ENCODE measurements at regions of chr12 and their contacts with region 1.

Region 1: GRCh38 chr12:1605129-1606020 is 11.0 kb upstream of the FBXL14 start:
- DNase-seq: peak; percentile 76
- H3K4me3 Mint-ChIP-seq: peak overlapping the region; percentile 76
- H3K27ac Mint-ChIP-seq: peak overlapping the region; percentile 81
- H3K4me1 Mint-ChIP-seq: peaks cover 39% of the 10 kb centered on the region
- H3K27me3 Mint-ChIP-seq: no peaks in the 10 kb centered on the region

Region 2: GRCh38 chr12:450438-450837 is 1154.9 kb before region 1 on chr12:
- CTCF ChIA-PET with region 1: no interaction called
- intact Hi-C with region 1: no loop called
- DNase-seq: no peak
- H3K4me3 Mint-ChIP-seq: no peak overlapping the region
- H3K27ac Mint-ChIP-seq: no peak overlapping the region
- H3K4me1 Mint-ChIP-seq: peaks cover 2% of the 10 kb centered on the region
- H3K27me3 Mint-ChIP-seq: no peaks in the 10 kb centered on the region

Region 3: GRCh38 chr12:1117970-1118563 is 487.3 kb before region 1 on chr12:
- CTCF ChIA-PET with region 1: interaction called, 27 read pairs
- intact Hi-C with region 1: loop called (anchors 1 kb)
- DNase-seq: peak; percentile 84
- H3K4me3 Mint-ChIP-seq: no peak overlapping the region
- H3K27ac Mint-ChIP-seq: no peak overlapping the region
- H3K4me1 Mint-ChIP-seq: peaks cover 19% of the 10 kb centered on the region
- H3K27me3 Mint-ChIP-seq: no peaks in the 10 kb centered on the region

Region 4: DNA sequence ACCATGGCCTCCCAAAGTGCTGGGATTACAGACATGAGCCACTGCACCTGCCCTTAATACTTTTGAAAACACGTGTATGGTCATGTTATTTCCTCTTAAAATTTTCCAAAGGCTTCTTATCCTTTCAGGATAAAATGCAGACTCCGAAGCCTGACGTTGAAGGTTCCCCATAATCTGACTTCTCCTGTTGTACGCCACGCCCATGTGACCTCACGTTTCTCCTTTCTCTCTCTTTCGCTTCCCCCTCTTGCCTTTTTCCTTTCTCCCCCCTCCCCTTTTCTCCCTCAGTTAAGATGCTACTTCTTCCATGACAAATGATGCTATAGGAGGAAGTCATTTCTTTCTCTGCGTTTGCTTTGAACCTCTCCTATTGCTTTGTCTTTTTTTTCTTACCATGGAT is 277.0 kb before region 1 on chr12:
- CTCF ChIA-PET with region 1: no interaction called
- intact Hi-C with region 1: loop called (anchors 10 kb)
- DNase-seq: no peak
- H3K4me3 Mint-ChIP-seq: no peak overlapping the region
- H3K27ac Mint-ChIP-seq: no peak overlapping the region
- H3K4me1 Mint-ChIP-seq: peaks cover 13% of the 10 kb centered on the region
- H3K27me3 Mint-ChIP-seq: no peaks in the 10 kb centered on the region

Region 5: DNA sequence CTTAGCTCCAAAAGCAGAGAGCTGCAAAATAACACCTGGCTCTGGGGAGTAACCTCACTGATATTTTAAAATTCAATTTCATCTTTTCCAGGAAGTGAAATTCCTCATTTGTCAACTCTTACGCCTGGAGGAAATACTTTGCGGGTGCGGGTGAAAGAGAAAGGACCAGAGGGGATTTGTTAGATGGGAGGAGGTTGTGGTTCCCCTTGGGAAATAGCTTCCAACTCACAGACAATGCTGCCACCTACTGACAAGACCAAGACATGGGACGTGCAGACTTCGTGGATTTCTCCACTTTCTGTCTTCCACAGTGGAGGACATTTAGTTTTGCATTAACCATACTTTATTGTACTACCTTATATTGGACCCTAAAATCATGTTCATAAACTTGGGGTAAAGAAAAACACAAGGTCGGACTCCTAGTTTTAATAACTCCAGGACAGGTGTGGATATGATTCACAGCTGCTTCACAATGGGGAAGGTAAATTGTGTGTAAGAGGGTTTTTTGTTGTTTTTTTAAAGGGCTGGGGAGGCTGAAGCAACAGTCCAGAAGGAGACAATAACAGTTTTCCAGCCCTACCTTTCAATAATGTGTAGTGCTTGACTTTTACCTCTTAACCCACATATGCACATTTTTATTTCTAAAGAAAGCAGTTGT is 21.8 kb before region 1 on chr12:
- CTCF ChIA-PET with region 1: interaction called, 16 read pairs
- intact Hi-C with region 1: no loop called
- DNase-seq: peak; percentile 83
- H3K4me3 Mint-ChIP-seq: no peak overlapping the region
- H3K27ac Mint-ChIP-seq: no peak overlapping the region
- H3K4me1 Mint-ChIP-seq: peaks cover 19% of the 10 kb centered on the region
- H3K27me3 Mint-ChIP-seq: no peaks in the 10 kb centered on the region

Region 6: GRCh38 chr12:1634590-1635191 is 29.3 kb after region 1 on chr12:
- CTCF ChIA-PET with region 1: interaction called, 11 read pairs
- intact Hi-C with region 1: no loop called
- DNase-seq: peak; percentile 76
- H3K4me3 Mint-ChIP-seq: no peak overlapping the region
- H3K27ac Mint-ChIP-seq: no peak overlapping the region
- H3K4me1 Mint-ChIP-seq: peaks cover 9% of the 10 kb centered on the region
- H3K27me3 Mint-ChIP-seq: peaks cover 32% of the 10 kb centered on the region

Region 7: DNA sequence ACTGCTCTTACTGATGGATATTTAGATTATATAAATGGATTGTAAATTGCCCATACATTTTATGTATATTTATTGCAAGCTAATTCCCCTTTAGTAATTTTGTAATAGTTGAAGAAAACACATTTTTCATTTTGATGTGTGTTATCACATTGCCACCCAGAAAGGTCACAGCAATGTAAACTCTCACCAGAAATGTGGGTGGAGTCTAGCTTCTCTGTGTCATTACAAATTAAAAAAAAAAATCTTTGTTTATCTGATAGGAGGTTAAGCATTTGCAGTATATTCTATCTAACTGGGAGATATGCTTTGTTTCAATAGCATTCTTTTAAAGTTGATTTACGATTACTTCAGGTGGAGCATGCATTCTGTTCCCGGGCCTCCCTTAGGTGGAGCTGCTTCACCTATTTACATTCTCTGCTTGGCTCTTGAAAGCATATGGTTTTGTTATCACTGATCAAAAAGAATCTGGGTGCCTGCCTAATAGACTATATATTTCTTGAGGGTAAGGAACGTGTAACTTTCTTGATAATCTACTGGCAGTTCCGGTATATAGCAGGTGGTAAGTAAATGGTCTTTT is 93.4 kb after region 1 on chr12:
- CTCF ChIA-PET with region 1: no interaction called
- intact Hi-C with region 1: no loop called
- DNase-seq: peak; percentile 10
- H3K4me3 Mint-ChIP-seq: no peak overlapping the region
- H3K27ac Mint-ChIP-seq: no peak overlapping the region
- H3K4me1 Mint-ChIP-seq: peaks cover 66% of the 10 kb centered on the region
- H3K27me3 Mint-ChIP-seq: no peaks in the 10 kb centered on the region

Measured in activated naive CD4-positive, alpha-beta T cell treated with anti-CD3 and anti-CD28 coated beads for 36 hours (primary cell).